Activated CD4-positive, alpha-beta T cell treated with anti-CD3 and anti-CD28 coated beads for 36 hours (primary cell): ENCODE measurements at regions of chr11 and their contacts with region 1.

Region 1: DNA sequence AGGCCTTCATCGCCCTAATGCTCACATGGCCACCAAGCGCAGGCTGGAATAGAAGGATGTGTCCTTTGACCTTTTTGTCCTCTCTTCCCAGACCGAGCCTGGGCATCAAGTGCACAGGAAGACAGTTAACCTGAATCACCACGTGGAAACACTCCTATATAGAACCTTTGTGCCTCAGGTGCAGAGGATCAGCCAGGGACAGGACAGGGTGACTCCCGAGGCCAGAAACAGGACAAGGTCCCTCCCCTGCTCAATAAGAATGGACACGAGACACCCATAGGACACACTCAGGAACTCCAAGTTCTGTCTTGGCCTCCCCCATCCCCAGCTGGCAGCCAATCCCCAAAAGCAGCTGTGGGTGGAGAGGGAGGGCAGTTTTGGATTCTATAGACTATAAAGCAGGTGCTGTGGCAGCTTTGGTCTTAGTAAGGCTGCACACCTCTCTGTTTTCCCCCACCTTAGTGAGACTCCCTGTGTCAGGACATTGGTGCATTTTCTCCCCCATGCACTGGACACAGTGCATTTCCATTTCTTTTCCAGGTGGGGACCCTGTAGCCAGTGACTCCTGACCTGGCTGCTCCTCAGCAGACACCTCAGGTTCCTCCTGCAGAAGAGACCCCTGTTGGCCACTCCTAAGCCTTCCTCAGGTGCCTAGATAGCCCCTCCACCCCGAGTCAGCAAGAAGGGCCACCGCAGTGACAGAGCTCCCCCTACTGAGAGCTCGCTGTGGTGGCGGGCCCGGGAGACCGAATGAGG is 43.6 kb upstream of the POU2AF1 start:
- DNase-seq: peak; percentile 81
- ATAC-seq: peak; percentile 94
- H3K4me3 Mint-ChIP-seq: no peak overlapping the region
- H3K27ac Mint-ChIP-seq: no peak overlapping the region
- H3K4me1 Mint-ChIP-seq: peaks cover 4% of the 10 kb centered on the region
- H3K27me3 Mint-ChIP-seq: no peaks in the 10 kb centered on the region

Region 2: GRCh38 chr11:110463153-110463552 is 959.5 kb before region 1 on chr11:
- CTCF ChIA-PET with region 1: no interaction called
- POLR2A ChIA-PET with region 1: no interaction called
- intact Hi-C with region 1: loop called in 1 of 2 experiments (anchors 10 kb)
- DNase-seq: peak; percentile 67
- ATAC-seq: no peak
- H3K4me3 Mint-ChIP-seq: no peak overlapping the region
- H3K27ac Mint-ChIP-seq: no peak overlapping the region
- H3K4me1 Mint-ChIP-seq: no peaks in the 10 kb centered on the region
- H3K27me3 Mint-ChIP-seq: no peaks in the 10 kb centered on the region

Region 3: DNA sequence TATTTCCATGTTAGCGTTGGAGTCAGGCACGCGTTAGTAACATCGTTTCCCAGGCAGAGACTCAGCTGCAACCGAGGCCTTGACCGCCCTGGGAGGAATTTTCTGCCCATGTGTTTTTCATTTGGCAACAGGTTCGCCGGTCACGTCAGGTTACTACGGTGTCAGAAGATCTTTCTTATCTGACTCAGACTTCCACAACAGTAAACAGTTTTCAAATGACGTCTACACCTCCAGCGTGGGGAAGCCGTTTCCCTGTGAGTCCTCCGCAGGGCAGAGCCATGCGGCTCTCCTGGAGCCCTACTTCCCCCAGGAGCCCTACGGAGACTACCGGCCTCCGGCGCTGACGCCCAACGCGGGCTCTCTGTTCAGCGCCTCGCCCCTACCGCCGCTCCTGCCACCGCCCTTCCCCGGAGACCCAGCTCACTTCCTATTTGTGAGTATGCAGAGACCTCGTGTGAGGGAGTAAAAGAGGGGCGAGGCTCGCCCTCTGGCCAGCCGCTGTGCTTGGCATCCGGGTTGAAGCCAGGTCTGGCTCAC is 138.7 kb before region 1 on chr11:
- CTCF ChIA-PET with region 1: interaction called, 322 read pairs
- POLR2A ChIA-PET with region 1: no interaction called
- intact Hi-C with region 1: loop called (anchors 1 kb)
- DNase-seq: no peak
- ATAC-seq: no peak
- H3K4me3 Mint-ChIP-seq: no peak overlapping the region
- H3K27ac Mint-ChIP-seq: no peak overlapping the region
- H3K4me1 Mint-ChIP-seq: peaks cover 3% of the 10 kb centered on the region
- H3K27me3 Mint-ChIP-seq: no peaks in the 10 kb centered on the region

Region 4: DNA sequence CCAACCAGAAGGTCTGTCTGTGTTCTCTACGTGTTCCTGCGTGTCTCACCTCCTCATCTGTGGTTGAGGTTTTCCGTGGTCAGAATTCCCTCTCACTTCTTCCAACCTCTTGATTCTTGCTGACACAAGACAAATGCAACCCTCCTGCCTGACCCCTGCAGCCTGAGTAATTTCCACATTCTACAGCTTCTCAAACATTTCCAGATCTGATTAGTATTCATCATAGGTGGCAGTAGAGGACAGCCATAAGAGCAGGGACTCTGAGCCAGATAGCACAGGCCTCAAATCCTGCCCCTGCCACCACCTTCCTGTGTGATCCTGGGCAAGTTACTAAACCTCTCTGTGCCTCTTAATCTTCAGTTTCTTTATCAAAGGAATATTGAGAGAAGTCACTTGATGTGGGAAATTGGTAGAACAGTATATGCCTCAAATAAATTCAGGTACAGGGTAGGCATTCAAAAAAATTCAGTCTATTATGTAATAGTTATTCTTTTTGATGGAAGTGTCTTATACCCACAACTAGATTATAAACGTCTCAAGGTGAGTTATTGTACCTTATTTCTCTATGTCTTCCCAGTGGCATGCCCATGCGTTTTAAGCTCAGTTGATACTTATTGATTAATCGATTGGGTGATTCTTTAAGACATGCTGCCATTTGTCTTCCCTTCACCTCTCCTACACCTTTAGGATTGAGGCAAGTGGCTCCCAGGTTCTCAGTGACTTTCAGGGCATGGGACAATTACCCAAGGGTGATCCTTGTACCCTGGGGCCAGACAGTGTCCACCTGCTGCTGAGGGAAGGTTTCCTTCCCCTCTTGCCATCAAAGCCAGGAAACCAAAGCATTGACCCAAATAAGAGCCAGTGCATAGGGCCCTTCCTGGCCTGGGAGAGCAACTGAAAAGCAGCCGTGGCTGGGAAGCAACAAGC is 63.2 kb before region 1 on chr11:
- CTCF ChIA-PET with region 1: interaction called, 17 read pairs
- POLR2A ChIA-PET with region 1: no interaction called
- intact Hi-C with region 1: loop called (anchors 1 kb)
- DNase-seq: peak; percentile 39
- ATAC-seq: peak; percentile 83
- H3K4me3 Mint-ChIP-seq: no peak overlapping the region
- H3K27ac Mint-ChIP-seq: no peak overlapping the region
- H3K4me1 Mint-ChIP-seq: peaks cover 2% of the 10 kb centered on the region
- H3K27me3 Mint-ChIP-seq: no peaks in the 10 kb centered on the region

Region 5: DNA sequence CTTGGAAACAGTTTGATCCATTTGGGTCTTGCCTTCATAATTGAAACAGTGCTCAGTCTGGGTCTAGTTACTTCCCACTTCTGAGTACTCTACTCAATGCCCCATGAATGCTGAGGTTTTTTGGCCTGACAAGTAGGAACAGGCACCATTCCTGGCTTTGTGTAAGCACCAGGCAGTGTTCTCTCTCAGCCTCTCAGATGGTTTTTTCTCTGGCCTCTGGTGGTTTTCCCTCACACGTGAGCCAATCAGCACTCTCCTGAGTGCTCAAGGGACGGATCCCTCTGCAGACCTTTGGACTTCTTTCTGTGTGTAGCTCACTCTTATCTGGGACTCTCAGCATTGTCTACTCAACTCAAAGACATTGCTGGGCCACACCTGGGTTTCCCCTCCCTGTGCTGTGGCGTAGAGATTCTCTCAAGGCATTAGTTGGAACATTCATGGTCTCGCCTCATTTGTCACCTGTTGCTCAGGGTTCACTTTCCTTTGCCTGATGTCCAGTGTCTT is 200.9 kb after region 1 on chr11:
- CTCF ChIA-PET with region 1: no interaction called
- POLR2A ChIA-PET with region 1: no interaction called
- intact Hi-C with region 1: no loop called
- DNase-seq: no peak
- ATAC-seq: no peak
- H3K4me3 Mint-ChIP-seq: no peak overlapping the region
- H3K27ac Mint-ChIP-seq: no peak overlapping the region
- H3K4me1 Mint-ChIP-seq: no peaks in the 10 kb centered on the region
- H3K27me3 Mint-ChIP-seq: no peaks in the 10 kb centered on the region

Region 6: GRCh38 chr11:111797145-111797581 is 374.5 kb after region 1 on chr11:
- CTCF ChIA-PET with region 1: no interaction called
- POLR2A ChIA-PET with region 1: no interaction called
- intact Hi-C with region 1: no loop called
- DNase-seq: no peak
- ATAC-seq: peak; percentile 23
- H3K4me3 Mint-ChIP-seq: no peak overlapping the region
- H3K27ac Mint-ChIP-seq: no peak overlapping the region
- H3K4me1 Mint-ChIP-seq: peaks cover 4% of the 10 kb centered on the region
- H3K27me3 Mint-ChIP-seq: no peaks in the 10 kb centered on the region